ENCODE measurements at regions of chr12 and their contacts with region 1.

Region 1: GRCh38 chr12:43805860-43806736 is at the start of gene TWF1:
- DNase-seq: peak; percentile 84
- H3K4me3 Mint-ChIP-seq: peak within 1 kb of the TSS; percentile 99
- H3K27ac Mint-ChIP-seq: peak within 1 kb of the TSS; percentile 100
- H3K4me1 Mint-ChIP-seq: peaks cover 37% of the 10 kb centered on the region
- H3K27me3 Mint-ChIP-seq: peaks cover under 1% of the 10 kb centered on the region
- total RNA-seq, gene TWF1: 24.0 to 31.5 TPM

Region 2: GRCh38 chr12:43816168-43816567 is 10.1 kb after region 1 on chr12:
- CTCF ChIA-PET with region 1: interaction called, 16 read pairs
- POLR2A ChIA-PET with region 1: no interaction called
- DNase-seq: no peak
- H3K4me3 Mint-ChIP-seq: no peak overlapping the region
- H3K27ac Mint-ChIP-seq: no peak overlapping the region
- H3K4me1 Mint-ChIP-seq: peaks cover 2% of the 10 kb centered on the region
- H3K27me3 Mint-ChIP-seq: peaks cover 5% of the 10 kb centered on the region

Region 3: DNA sequence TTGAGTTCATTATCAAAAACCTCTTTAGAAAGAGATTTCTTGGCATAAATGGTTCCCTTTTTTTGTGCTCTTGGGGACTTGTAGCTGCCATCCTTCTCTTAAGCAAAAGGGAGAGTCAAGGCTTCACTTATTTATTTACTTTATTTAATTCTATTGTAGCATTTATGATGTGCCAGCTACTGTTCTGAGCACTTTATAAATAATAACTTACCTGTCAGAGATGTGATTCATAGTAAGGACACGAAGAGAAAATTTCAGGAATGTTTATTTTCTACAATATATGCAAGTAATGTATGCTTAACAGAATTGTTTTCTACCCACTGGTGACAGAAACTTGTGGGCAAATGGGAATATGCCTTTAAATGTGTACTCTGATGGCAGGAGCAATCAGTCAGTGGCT is 63.1 kb after region 1 on chr12:
- CTCF ChIA-PET with region 1: no interaction called
- POLR2A ChIA-PET with region 1: no interaction called
- DNase-seq: no peak
- H3K4me3 Mint-ChIP-seq: no peak overlapping the region
- H3K27ac Mint-ChIP-seq: no peak overlapping the region
- H3K4me1 Mint-ChIP-seq: no peaks in the 10 kb centered on the region
- H3K27me3 Mint-ChIP-seq: no peaks in the 10 kb centered on the region